ENCODE measurements at regions of chr12 and their contacts with region 1.

Region 1: DNA sequence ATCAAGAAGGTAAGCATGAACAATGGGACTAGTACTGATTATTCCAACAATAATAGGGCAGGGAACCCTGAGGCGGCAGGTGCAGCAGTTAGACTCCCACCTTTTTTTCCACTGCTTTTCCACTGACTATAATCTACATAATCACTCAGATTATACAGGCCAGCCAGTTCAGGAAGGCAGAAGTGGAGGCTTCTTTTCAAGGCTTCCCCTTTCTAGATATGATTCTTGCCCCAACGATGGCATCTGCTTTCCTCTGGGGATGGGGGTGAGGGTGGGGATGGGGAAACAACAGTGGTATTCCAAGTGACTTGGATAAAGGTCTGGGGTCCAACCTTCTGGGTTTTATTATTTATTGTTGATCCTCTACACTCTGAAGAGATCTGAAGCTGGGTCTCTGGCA is 331 bp downstream of the NCKAP1L start:
- DNase-seq: no peak
- H3K4me3 Mint-ChIP-seq: peak overlapping the region; percentile 100
- H3K27ac Mint-ChIP-seq: peak overlapping the region; percentile 98
- H3K4me1 Mint-ChIP-seq: peaks cover 40% of the 10 kb centered on the region
- H3K27me3 Mint-ChIP-seq: no peaks in the 10 kb centered on the region

Region 2: DNA sequence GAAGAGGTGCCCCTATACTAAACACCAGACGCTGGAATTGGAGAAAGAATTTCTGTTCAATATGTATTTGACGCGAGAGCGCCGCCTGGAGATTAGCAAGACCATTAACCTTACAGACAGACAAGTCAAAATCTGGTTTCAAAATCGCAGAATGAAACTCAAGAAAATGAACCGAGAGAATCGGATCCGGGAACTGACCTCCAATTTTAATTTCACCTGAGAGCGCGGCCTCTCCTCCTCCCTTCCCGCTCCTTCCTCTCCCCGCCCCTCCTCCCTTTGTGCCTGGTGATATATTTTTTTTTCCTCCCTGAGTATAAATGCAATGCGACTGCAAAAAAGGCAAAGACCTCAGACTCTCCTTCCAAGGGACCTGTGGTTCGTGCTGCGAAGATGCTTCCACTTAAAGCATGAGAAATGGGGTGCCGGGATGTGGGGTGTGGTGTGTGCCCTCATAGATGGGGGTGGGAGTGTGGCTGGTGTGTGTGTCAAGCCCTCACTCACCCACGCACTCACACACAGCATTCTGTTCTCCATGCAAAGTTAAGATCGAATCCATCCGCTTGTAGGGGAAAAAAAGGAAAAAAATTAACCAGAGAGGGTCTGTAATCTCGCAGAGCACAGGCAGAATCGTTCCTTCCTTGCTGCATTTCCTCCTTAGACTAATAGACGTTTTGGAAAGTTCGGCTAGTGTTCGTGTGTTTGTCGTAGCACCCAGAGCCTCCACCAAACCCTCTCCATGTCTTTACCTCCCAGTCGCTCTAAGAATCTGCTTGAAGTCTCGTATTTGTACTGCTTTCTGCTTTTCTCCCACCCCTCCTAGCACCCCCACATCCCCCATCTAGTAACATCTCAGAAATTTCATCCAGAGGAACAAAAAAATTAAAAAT is 508.4 kb before region 1 on chr12:
- CTCF ChIA-PET with region 1: no interaction called
- POLR2A ChIA-PET with region 1: no interaction called
- intact Hi-C with region 1: no loop called
- DNase-seq: peak; percentile 53
- H3K4me3 Mint-ChIP-seq: no peak overlapping the region
- H3K27ac Mint-ChIP-seq: no peak overlapping the region
- H3K4me1 Mint-ChIP-seq: peaks cover 39% of the 10 kb centered on the region
- H3K27me3 Mint-ChIP-seq: peaks cover 89% of the 10 kb centered on the region

Region 3: DNA sequence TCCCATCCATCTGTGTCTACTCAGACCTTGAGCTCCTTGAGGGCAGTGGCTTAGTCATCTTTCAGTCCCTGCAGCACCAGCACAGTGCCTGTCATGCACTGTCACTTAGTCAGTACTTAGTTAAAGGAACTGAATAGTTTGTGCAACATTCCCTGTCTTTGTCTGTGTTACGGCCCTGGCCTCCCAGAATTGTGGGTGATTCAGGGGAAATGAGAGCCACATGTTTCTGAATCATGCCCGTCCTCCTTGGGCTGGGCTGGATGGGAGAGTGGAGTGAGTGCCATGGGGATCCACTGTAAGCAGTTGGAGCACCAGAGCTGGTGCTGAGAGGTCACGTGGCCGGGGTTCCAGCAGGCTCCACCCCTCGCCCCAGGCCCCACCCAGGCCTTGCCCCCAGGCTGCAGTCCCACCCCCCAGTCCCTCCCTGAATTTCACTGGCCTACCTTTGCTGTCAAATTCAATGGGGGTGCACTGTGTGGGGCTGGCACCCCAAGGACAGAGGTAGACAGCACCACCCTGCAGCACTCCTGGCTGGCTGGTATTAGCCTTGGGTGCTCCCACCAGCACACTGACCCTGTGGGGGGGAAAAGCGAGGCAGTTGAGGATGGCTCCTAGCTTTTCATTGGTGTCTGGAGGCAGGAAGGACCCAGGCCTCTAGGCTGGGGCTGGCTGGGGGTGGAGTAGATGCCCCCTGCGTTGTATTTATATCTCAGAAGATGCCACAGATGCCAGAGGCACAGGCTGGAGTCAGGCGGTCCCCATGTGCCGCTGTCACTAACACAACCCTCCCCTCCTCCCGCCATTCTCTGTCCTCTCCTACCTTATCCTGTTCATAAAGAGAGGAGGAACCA is 86.3 kb before region 1 on chr12:
- CTCF ChIA-PET with region 1: no interaction called
- POLR2A ChIA-PET with region 1: interaction called, 4 read pairs
- intact Hi-C with region 1: loop called (anchors 2 kb)
- DNase-seq: peak; percentile 77
- H3K4me3 Mint-ChIP-seq: no peak overlapping the region
- H3K27ac Mint-ChIP-seq: peak overlapping the region; percentile 96
- H3K4me1 Mint-ChIP-seq: peaks cover 63% of the 10 kb centered on the region
- H3K27me3 Mint-ChIP-seq: no peaks in the 10 kb centered on the region

Region 4: GRCh38 chr12:54448344-54448743 is 49.5 kb before region 1 on chr12:
- CTCF ChIA-PET with region 1: no interaction called
- POLR2A ChIA-PET with region 1: no interaction called
- intact Hi-C with region 1: no loop called
- DNase-seq: no peak
- H3K4me3 Mint-ChIP-seq: no peak overlapping the region
- H3K27ac Mint-ChIP-seq: no peak overlapping the region
- H3K4me1 Mint-ChIP-seq: no peaks in the 10 kb centered on the region
- H3K27me3 Mint-ChIP-seq: no peaks in the 10 kb centered on the region

Measured in activated CD4-positive, alpha-beta memory T cell treated with anti-CD3 and anti-CD28 coated beads for 36 hours (primary cell).